Panc1 (cell line): ENCODE measurements at regions of chr19 and their contacts with region 1.

Region 1: GRCh38 chr19:50909240-50910070 is 1.7 kb downstream of the KLK4 start:
- DNase-seq: no peak
- ATAC-seq: peak; percentile 86
- H3K4me3 ChIP-seq: peak overlapping the region in 1 of 2 experiments; percentile 24; a peak in 1 of 4 replicates
- H3K27ac ChIP-seq: no peak overlapping the region
- H3K4me1 ChIP-seq: no peaks in the 10 kb centered on the region
- H3K27me3 ChIP-seq: peaks cover 4% of the 10 kb centered on the region; the same call in 1 of the 2 replicates
- CTCF ChIP-seq: no peak

Region 2: DNA sequence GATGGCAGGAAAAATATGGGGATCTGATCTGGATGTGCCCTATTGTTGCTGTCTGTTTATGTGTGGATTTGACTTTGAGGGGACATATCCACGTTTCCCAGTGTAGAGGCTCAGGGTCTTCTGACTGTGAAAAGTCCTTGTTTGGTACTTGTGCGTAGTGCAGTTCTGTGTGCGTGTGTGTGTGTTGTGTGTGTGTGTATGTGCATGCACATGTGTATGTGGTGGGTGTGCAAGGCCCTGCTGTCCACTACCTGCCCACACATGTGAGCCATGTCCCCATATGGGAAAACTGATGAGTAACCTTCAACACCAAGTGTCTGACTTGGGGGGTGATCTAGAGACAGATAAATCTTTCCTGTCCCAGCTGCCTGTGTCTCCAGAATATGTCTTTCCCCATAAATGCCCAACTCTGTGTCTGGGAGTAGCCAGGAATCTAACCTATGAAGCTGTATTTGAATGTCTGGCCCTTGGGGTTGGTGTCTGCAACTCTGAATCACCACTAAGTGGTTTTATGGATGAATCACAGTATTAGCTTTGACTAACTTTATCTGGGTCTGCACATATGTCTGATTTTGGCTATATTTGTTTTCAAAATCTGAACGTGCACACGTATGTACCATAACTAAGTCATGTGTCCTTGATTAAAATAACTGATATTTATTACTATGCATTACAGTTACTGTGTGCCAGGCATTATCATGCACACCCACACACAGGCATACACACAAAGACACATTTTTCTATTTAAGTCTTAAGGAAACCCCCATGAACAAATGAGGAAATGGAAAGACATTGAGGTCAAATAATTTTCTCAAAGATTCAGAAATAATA is 18.8 kb before region 1 on chr19:
- CTCF ChIA-PET with region 1: no interaction called
- POLR2A ChIA-PET with region 1: interaction called, 12 read pairs
- in situ Hi-C with region 1: no loop called
- intact Hi-C with region 1: no loop called
- DNase-seq: no peak
- ATAC-seq: no peak
- H3K4me3 ChIP-seq: no peak overlapping the region
- H3K27ac ChIP-seq: no peak overlapping the region
- H3K4me1 ChIP-seq: no peaks in the 10 kb centered on the region
- H3K27me3 ChIP-seq: peaks cover 2% of the 10 kb centered on the region; the same call in 1 of the 2 replicates
- CTCF ChIP-seq: no peak

Region 3: GRCh38 chr19:50975757-50976156 is 66.3 kb after region 1 on chr19:
- CTCF ChIA-PET with region 1: no interaction called
- POLR2A ChIA-PET with region 1: no interaction called
- in situ Hi-C with region 1: no loop called
- intact Hi-C with region 1: no loop called
- DNase-seq: no peak
- ATAC-seq: no peak
- H3K4me3 ChIP-seq: no peak overlapping the region
- H3K27ac ChIP-seq: no peak overlapping the region
- H3K4me1 ChIP-seq: no peaks in the 10 kb centered on the region
- H3K27me3 ChIP-seq: no peaks in the 10 kb centered on the region; the same call in 1 of the 2 replicates
- CTCF ChIP-seq: no peak

Region 4: GRCh38 chr19:51016798-51017683 is 107.6 kb after region 1 on chr19:
- CTCF ChIA-PET with region 1: no interaction called
- POLR2A ChIA-PET with region 1: no interaction called
- in situ Hi-C with region 1: no loop called
- intact Hi-C with region 1: no loop called
- DNase-seq: no peak
- ATAC-seq: peak; percentile 85
- H3K4me3 ChIP-seq: peak overlapping the region; percentile 33 to 53
- H3K27ac ChIP-seq: no peak overlapping the region
- H3K4me1 ChIP-seq: peaks cover 3% of the 10 kb centered on the region
- H3K27me3 ChIP-seq: peaks cover 2% of the 10 kb centered on the region; the same call in 1 of the 2 replicates
- CTCF ChIP-seq: peak; percentile 89

Region 5: DNA sequence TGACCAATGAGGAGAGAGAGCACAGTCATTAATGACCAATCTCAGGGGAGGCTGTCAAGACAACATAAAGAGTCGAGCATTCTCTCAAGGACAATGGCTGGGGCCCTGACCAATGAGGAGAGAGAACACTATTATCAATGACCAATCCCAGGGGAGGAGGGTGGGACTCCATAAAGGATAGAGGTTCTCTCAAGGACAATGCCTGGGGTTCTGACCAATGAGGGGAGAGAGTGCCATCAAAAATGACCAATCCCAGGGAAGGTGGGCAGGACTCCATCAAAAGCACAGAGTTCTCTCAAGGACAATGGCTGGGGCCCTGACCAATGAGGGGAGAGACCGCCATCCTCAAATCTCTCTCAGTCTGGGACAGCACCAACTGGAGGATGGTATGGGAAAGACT is 120.3 kb after region 1 on chr19:
- CTCF ChIA-PET with region 1: no interaction called
- POLR2A ChIA-PET with region 1: no interaction called
- in situ Hi-C with region 1: no loop called
- intact Hi-C with region 1: no loop called
- DNase-seq: no peak
- ATAC-seq: no peak
- H3K4me3 ChIP-seq: no peak overlapping the region
- H3K27ac ChIP-seq: no peak overlapping the region
- H3K4me1 ChIP-seq: no peaks in the 10 kb centered on the region
- H3K27me3 ChIP-seq: no peaks in the 10 kb centered on the region
- CTCF ChIP-seq: no peak

Region 6: GRCh38 chr19:51079481-51080110 is 170.1 kb after region 1 on chr19:
- CTCF ChIA-PET with region 1: interaction called, 21 read pairs
- POLR2A ChIA-PET with region 1: no interaction called
- in situ Hi-C with region 1: no loop called
- intact Hi-C with region 1: no loop called
- DNase-seq: no peak
- ATAC-seq: no peak
- H3K4me3 ChIP-seq: no peak overlapping the region
- H3K27ac ChIP-seq: no peak overlapping the region
- H3K4me1 ChIP-seq: no peaks in the 10 kb centered on the region
- H3K27me3 ChIP-seq: no peaks in the 10 kb centered on the region
- CTCF ChIP-seq: no peak